ENCODE measurements at regions of chr13 and their contacts with region 1.

Region 1: GRCh38 chr13:37241786-37242185 is 136.3 kb upstream of the CSNK1A1L start:
- DNase-seq: no peak
- ATAC-seq: no peak
- H3K4me3 ChIP-seq: no peak overlapping the region
- H3K27ac ChIP-seq: no peak overlapping the region
- H3K4me1 ChIP-seq: no peaks in the 10 kb centered on the region
- H3K27me3 ChIP-seq: no peaks in the 10 kb centered on the region
- CTCF ChIP-seq: no peak
- EP300 ChIP-seq: no peak
- POLR2A ChIP-seq: no peak
- RAD21 ChIP-seq: no peak

Region 2: GRCh38 chr13:37187105-37187504 is 54.7 kb before region 1 on chr13:
- CTCF ChIA-PET with region 1: no interaction called
- POLR2A ChIA-PET with region 1: no interaction called
- RAD21 ChIA-PET with region 1: no interaction called
- SMC1A ChIA-PET with region 1: no interaction called
- in situ Hi-C with region 1: no loop called
- intact Hi-C with region 1: loop called (anchors 10 kb)
- DNase-seq: no peak
- ATAC-seq: no peak
- H3K4me3 ChIP-seq: no peak overlapping the region
- H3K27ac ChIP-seq: no peak overlapping the region
- H3K4me1 ChIP-seq: no peaks in the 10 kb centered on the region
- H3K27me3 ChIP-seq: no peaks in the 10 kb centered on the region
- CTCF ChIP-seq: no peak
- EP300 ChIP-seq: no peak
- POLR2A ChIP-seq: no peak
- RAD21 ChIP-seq: no peak

Region 3: GRCh38 chr13:37288057-37288720 is 46.4 kb after region 1 on chr13:
- CTCF ChIA-PET with region 1: no interaction called
- POLR2A ChIA-PET with region 1: no interaction called
- RAD21 ChIA-PET with region 1: no interaction called
- SMC1A ChIA-PET with region 1: no interaction called
- in situ Hi-C with region 1: no loop called
- intact Hi-C with region 1: no loop called
- DNase-seq: no peak
- ATAC-seq: no peak
- H3K4me3 ChIP-seq: no peak overlapping the region
- H3K27ac ChIP-seq: no peak overlapping the region
- H3K4me1 ChIP-seq: no peaks in the 10 kb centered on the region
- H3K27me3 ChIP-seq: no peaks in the 10 kb centered on the region
- CTCF ChIP-seq: no peak
- EP300 ChIP-seq: no peak
- POLR2A ChIP-seq: no peak
- RAD21 ChIP-seq: no peak